ENCODE measurements at regions of chrX and their contacts with region 1.

Region 1: DNA sequence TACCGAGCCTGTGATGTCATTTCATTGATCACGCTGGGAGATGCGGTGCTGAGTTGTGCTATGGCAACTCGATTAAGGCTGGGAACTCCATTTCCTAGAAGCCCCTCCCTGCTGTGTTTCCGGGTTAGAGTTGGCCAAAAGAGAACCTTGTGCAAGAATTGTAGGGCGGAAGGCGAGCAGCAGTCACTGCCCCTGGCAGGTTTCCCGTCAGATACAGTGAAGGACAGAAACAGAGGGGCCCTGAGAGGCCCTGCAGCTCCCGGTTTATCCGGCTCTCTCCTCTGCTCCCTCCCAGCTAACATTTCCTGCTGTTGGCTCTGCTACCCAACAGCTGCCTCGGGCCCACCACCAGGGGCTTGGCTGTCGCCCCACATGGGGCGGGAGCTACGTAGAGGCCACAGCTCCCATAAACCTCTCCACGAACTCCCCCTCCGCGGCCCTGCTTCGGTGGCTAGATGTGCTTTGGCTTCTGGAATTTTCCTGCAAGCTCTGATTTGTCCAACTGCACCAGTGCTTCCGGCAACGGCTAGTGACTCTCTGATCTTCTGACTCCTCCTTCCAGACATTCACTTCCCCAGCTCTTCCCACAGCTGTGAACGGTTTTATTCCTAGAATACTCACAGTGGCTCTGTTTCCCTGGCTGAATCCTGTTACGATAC is 74.9 kb upstream of the USP9X start:
- DNase-seq: peak; percentile 70 to 90
- ATAC-seq: peak; percentile 94 to 97 (median 96)
- H3K4me3 ChIP-seq: peak overlapping the region in 8 of 10 donors; percentile 6 to 45 (median 36)
- H3K27ac ChIP-seq: peak overlapping the region; percentile 64 to 91 (median 84)
- H3K4me1 ChIP-seq: peaks cover 0 to 24% (median 8%) of the 10 kb centered on the region in 9 donors
- H3K27me3 ChIP-seq: peaks cover 0 to 56% (median 0%) of the 10 kb centered on the region in 7 donors
- CTCF ChIP-seq: peak in 6 of 9 donors; percentile 24 to 47 (median 36)

Region 2: DNA sequence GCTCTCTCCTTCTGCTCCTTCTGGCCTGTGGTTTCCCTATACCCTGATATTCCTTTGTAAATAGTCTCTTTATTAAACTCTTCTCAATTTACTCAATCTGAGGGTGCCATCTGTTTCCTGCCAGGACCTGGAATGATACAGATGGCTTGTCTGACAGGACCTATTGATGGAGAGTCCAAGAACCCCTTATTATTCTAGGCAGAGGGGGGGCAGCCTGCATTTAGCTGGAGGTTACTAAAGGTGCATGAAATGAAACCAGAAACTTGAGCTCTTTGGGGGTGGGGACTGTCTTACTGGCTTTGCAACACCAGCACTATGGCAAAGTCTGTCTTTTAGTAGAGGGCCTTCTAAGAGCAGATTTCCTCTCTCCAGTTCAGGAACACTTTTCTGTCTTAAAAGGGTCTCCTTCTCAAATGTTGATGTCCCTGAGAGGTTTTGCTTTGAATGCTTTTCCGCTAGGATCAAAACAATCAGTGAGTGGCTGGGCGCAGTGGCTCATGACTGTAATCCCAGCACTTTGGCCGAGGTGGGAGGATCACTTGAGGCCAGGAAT is 112.5 kb before region 1 on chrX:
- intact Hi-C with region 1: no loop called
- DNase-seq: no peak
- ATAC-seq: no peak
- H3K4me3 ChIP-seq: no peak overlapping the region
- H3K27ac ChIP-seq: no peak overlapping the region
- H3K4me1 ChIP-seq: no peaks in the 10 kb centered on the region
- H3K27me3 ChIP-seq: peaks cover 0 to 60% (median 0%) of the 10 kb centered on the region in 7 donors
- CTCF ChIP-seq: no peak

Region 3: GRCh38 chrX:40933132-40933705 is 77.1 kb before region 1 on chrX:
- intact Hi-C with region 1: loop called in 1 of 10 experiments (anchors 10 kb)
- DNase-seq: peak in 1 of 2 donors; percentile 33
- ATAC-seq: peak in 7 of 8 donors; percentile 29 to 70 (median 45)
- H3K4me3 ChIP-seq: peak overlapping the region in 8 of 10 donors; percentile 7 to 36 (median 24)
- H3K27ac ChIP-seq: peak overlapping the region; percentile 13 to 84 (median 63)
- H3K4me1 ChIP-seq: peaks cover 0 to 27% (median 3%) of the 10 kb centered on the region in 9 donors
- H3K27me3 ChIP-seq: peaks cover 0 to 10% (median 0%) of the 10 kb centered on the region in 7 donors
- CTCF ChIP-seq: no peak

Region 4: GRCh38 chrX:40945361-40945713 is 65.0 kb before region 1 on chrX:
- intact Hi-C with region 1: loop called in 1 of 10 experiments (anchors 10 kb)
- DNase-seq: peak in 1 of 2 donors; percentile 23
- ATAC-seq: peak in 7 of 8 donors; percentile 62 to 93 (median 82)
- H3K4me3 ChIP-seq: no peak overlapping the region
- H3K27ac ChIP-seq: peak overlapping the region in 3 of 10 donors; percentile 0 to 61 (median 31)
- H3K4me1 ChIP-seq: peaks cover 0 to 14% (median 0%) of the 10 kb centered on the region in 9 donors
- H3K27me3 ChIP-seq: peaks cover 0 to 3% (median 0%) of the 10 kb centered on the region in 7 donors
- CTCF ChIP-seq: no peak

Region 5: DNA sequence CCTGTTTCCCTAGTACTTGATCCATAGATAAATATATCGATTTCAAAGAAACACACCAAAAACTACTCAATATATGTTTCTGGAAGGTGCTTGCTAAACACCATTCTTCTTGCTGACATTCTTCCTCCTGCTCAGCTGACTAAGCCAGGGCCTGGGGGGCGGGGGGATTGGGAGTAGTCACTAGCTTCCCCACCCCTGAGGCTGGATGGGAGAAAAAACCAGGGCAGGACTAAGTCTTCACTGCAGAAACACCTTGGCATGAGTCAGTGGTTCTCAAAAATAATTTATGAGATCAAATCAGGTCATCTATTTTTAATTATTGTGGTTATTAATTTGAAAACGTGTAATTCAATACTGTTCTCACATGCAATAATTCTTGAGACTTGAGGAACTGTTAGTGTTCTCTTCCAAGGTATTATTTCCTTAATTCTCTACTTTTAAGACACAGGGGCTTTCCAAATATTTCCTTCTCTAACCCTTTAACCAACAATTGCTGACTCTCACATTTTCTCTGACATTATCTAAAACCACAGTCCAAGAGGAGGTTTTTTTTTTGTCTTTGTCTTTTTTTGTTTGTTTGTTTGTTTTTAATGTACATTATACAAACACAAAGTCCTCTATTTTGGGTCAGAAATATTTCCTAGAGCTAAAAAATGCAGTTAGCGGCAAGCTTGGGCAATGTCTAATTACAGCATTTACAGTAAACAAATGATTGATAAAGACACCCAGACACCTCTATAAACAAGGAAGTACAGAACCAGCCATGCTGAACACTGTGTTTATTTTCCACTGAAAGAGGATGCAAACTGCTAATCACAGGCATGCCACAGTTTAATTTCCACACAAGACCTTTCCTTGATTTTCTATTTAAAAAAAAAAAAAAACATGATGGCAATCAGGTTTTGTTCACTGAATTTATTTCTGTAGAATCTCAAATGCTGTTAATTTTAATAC is 45.4 kb before region 1 on chrX:
- intact Hi-C with region 1: loop called in 1 of 10 experiments (anchors 10 kb)
- DNase-seq: no peak
- ATAC-seq: no peak
- H3K4me3 ChIP-seq: no peak overlapping the region
- H3K27ac ChIP-seq: peak overlapping the region in 5 of 10 donors; percentile 31 to 80 (median 66)
- H3K4me1 ChIP-seq: peaks cover 0 to 9% (median 0%) of the 10 kb centered on the region in 9 donors
- H3K27me3 ChIP-seq: no peaks in the 10 kb centered on the region
- CTCF ChIP-seq: no peak

Region 6: DNA sequence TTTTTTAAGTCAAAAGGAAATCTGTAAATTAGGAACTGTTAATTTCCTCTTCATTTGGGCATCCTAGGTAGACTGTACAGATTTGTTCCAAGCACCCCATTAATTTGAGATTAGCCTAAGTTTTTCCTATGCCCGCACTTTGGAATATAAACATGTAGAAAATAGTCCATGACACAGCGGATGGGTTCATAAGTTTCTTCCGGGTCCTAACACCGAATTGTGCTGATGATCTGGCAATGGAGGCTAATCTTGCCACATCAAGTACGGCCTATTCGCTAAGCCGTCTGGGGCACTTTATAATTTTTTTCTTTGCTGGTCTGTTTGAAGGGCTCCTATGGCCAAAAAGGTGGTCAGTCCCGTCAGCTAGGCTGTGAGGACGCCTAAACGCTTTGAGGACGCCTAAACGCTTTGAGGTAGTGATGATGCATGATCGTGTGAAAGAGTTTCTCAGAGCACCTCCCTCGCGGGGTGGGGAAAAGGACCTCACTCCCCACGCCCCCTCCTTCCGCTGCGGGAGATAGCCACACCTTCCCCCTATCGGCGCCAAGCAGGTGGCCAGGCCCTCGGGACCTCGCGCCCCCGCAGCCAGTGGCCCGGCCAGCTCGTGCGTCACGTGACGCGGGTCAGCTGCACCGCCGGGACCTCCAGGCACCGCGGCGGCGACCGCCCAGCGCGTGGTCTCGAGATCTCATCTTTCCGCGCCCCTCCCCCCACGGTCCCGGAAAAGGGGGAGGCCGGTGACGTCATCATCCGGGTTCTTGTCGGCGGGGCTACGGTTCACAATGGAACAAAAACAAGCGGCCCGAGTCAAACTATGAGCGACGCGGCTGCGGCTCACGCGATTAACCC is 74.0 kb after region 1 on chrX:
- intact Hi-C with region 1: loop called in 4 of 10 experiments (anchors 1 to 10 kb)
- DNase-seq: peak; percentile 95 to 96
- ATAC-seq: peak; percentile 81 to 93 (median 87)
- H3K4me3 ChIP-seq: peak overlapping the region; percentile 69 to 97 (median 83)
- H3K27ac ChIP-seq: peak overlapping the region; percentile 94 to 100 (median 98)
- H3K4me1 ChIP-seq: peaks cover 0 to 45% (median 11%) of the 10 kb centered on the region in 9 donors
- H3K27me3 ChIP-seq: peaks cover 0 to 93% (median 0%) of the 10 kb centered on the region in 7 donors
- CTCF ChIP-seq: no peak

Region 7: GRCh38 chrX:41300758-41301437 is 290.6 kb after region 1 on chrX:
- intact Hi-C with region 1: no loop called
- DNase-seq: no peak
- ATAC-seq: peak in 4 of 8 donors; percentile 19 to 38 (median 28)
- H3K4me3 ChIP-seq: no peak overlapping the region
- H3K27ac ChIP-seq: peak overlapping the region in 1 of 10 donors; percentile 29
- H3K4me1 ChIP-seq: peaks cover 0 to 21% (median 0%) of the 10 kb centered on the region in 9 donors
- H3K27me3 ChIP-seq: peaks cover 0 to 23% (median 0%) of the 10 kb centered on the region in 7 donors
- CTCF ChIP-seq: no peak

Measured in heart right ventricle (tissue), 16 donors.